ENCODE measurements at regions of chr6 and their contacts with region 1.

Region 1: GRCh38 chr6:18990059-18990978 is 603.2 kb downstream of the RNF144B start:
- DNase-seq: peak; percentile 71
- ATAC-seq: no peak
- H3K4me3 Mint-ChIP-seq: no peak overlapping the region
- H3K27ac Mint-ChIP-seq: no peak overlapping the region
- H3K4me1 Mint-ChIP-seq: no peaks in the 10 kb centered on the region
- H3K27me3 Mint-ChIP-seq: peaks cover 2% of the 10 kb centered on the region

Region 2: DNA sequence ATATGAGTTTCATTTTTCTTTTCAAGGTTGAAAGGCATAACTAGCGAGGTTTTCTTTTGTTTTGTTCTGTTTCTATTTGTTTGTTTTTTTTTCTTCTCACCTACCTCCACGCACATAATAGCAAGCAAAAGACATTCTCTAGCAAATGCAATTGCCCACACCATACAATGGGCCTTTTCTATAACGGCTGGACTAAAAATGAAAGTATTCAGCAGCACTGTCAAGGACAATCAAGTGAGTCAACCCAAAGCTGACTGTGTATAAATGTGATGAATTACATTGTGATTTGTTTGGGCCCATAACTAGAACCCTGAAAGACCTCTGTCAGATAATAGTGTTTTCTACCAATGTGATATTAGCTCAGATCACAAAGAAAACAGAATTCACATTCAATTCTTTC is 106.5 kb before region 1 on chr6:
- CTCF ChIA-PET with region 1: no interaction called
- POLR2A ChIA-PET with region 1: no interaction called
- intact Hi-C with region 1: no loop called
- DNase-seq: no peak
- ATAC-seq: no peak
- H3K4me3 Mint-ChIP-seq: no peak overlapping the region
- H3K27ac Mint-ChIP-seq: no peak overlapping the region
- H3K4me1 Mint-ChIP-seq: no peaks in the 10 kb centered on the region
- H3K27me3 Mint-ChIP-seq: no peaks in the 10 kb centered on the region

Region 3: DNA sequence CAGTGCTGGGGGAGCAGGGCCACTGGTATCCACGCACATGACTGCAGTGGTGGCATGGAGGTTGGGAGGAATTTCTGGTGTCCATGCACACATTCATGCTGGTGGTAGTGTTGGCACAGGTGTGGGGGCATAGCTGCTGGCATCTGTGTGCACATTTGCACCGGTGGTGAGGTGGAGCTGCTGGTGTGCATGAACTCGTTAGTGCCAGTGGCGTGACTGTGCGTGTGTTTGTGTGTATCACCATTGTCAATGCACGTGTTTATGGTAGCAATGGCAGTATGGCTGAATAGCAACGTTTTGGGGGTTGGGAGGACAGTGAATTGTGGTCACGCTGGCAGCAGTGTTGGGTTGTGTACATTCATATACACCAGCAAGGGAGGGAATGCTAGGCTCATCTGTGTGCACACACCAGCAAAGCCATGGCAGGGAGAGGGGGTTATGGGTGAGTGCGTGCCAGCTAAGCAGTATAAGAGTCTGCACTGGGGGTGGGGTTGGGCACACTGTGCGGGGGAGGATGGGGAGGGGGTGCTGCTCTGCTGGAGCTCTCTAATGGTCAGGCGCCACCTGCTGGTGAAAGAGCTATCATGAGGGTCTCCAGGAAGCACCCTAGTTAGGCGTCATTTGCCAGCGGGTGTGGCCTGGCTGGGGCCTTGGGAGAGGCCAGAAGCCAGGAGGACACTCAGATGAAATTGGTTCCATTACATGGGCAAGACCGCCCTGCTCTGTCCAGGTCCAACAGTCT is 220.7 kb after region 1 on chr6:
- CTCF ChIA-PET with region 1: no interaction called
- POLR2A ChIA-PET with region 1: no interaction called
- intact Hi-C with region 1: loop called in 1 of 2 experiments (anchors 5 kb)
- DNase-seq: peak; percentile 48
- ATAC-seq: no peak
- H3K4me3 Mint-ChIP-seq: no peak overlapping the region
- H3K27ac Mint-ChIP-seq: no peak overlapping the region
- H3K4me1 Mint-ChIP-seq: no peaks in the 10 kb centered on the region
- H3K27me3 Mint-ChIP-seq: no peaks in the 10 kb centered on the region

Region 4: GRCh38 chr6:20056350-20056992 is 1066.2 kb after region 1 on chr6:
- CTCF ChIA-PET with region 1: no interaction called
- POLR2A ChIA-PET with region 1: no interaction called
- intact Hi-C with region 1: loop called in 1 of 2 experiments (anchors 10 kb)
- DNase-seq: no peak
- ATAC-seq: no peak
- H3K4me3 Mint-ChIP-seq: no peak overlapping the region
- H3K27ac Mint-ChIP-seq: no peak overlapping the region
- H3K4me1 Mint-ChIP-seq: no peaks in the 10 kb centered on the region
- H3K27me3 Mint-ChIP-seq: no peaks in the 10 kb centered on the region

Measured in activated CD4-positive, alpha-beta T cell treated with anti-CD3 and anti-CD28 coated beads for 36 hours (primary cell).